ENCODE measurements at regions of chr6 and their contacts with region 1.

Region 1: GRCh38 chr6:27503436-27504030 is 30.6 kb upstream of the ZNF184 start:
- DNase-seq: peak; percentile 73
- ATAC-seq: peak; percentile 70
- H3K4me3 ChIP-seq: peak overlapping the region; percentile 78
- H3K27ac ChIP-seq: peak overlapping the region; percentile 58
- H3K4me1 ChIP-seq: no peaks in the 10 kb centered on the region
- H3K27me3 ChIP-seq: no peaks in the 10 kb centered on the region; a peak in 1 of 4 replicates
- CTCF ChIP-seq: no peak
- EP300 ChIP-seq: no peak
- POLR2A ChIP-seq: no peak
- RAD21 ChIP-seq: no peak

Region 2: GRCh38 chr6:27177485-27178406 is 325.8 kb before region 1 on chr6:
- CTCF ChIA-PET with region 1: interaction called, 3 read pairs
- POLR2A ChIA-PET with region 1: no interaction called
- RAD21 ChIA-PET with region 1: no interaction called
- SMC1A ChIA-PET with region 1: no interaction called
- in situ Hi-C with region 1: no loop called
- intact Hi-C with region 1: loop called (anchors 5 kb)
- DNase-seq: peak; percentile 61
- ATAC-seq: peak; percentile 89
- H3K4me3 ChIP-seq: peak overlapping the region; percentile 89
- H3K27ac ChIP-seq: peak overlapping the region; percentile 93
- H3K4me1 ChIP-seq: no peaks in the 10 kb centered on the region
- H3K27me3 ChIP-seq: no peaks in the 10 kb centered on the region
- CTCF ChIP-seq: peak; percentile 65 to 72 (median 70)
- EP300 ChIP-seq: no peak
- POLR2A ChIP-seq: peak; percentile 56; the same call in 1 of the 2 replicates
- RAD21 ChIP-seq: peak; percentile 54

Region 3: GRCh38 chr6:27479319-27480182 is 24.0 kb before region 1 on chr6:
- CTCF ChIA-PET with region 1: interaction called, 5 read pairs
- POLR2A ChIA-PET with region 1: interaction called, 3 read pairs
- RAD21 ChIA-PET with region 1: interaction called, 6 read pairs
- SMC1A ChIA-PET with region 1: interaction called, 4 read pairs
- in situ Hi-C with region 1: no loop called
- intact Hi-C with region 1: loop called (anchors 2 kb)
- DNase-seq: peak; percentile 97
- ATAC-seq: peak; percentile 86
- H3K4me3 ChIP-seq: peak overlapping the region; percentile 78
- H3K27ac ChIP-seq: peak overlapping the region; percentile 91
- H3K4me1 ChIP-seq: no peaks in the 10 kb centered on the region
- H3K27me3 ChIP-seq: no peaks in the 10 kb centered on the region
- CTCF ChIP-seq: no peak
- EP300 ChIP-seq: no peak; a peak in 1 of 4 replicates
- POLR2A ChIP-seq: peak; percentile 42
- RAD21 ChIP-seq: no peak

Region 4: DNA sequence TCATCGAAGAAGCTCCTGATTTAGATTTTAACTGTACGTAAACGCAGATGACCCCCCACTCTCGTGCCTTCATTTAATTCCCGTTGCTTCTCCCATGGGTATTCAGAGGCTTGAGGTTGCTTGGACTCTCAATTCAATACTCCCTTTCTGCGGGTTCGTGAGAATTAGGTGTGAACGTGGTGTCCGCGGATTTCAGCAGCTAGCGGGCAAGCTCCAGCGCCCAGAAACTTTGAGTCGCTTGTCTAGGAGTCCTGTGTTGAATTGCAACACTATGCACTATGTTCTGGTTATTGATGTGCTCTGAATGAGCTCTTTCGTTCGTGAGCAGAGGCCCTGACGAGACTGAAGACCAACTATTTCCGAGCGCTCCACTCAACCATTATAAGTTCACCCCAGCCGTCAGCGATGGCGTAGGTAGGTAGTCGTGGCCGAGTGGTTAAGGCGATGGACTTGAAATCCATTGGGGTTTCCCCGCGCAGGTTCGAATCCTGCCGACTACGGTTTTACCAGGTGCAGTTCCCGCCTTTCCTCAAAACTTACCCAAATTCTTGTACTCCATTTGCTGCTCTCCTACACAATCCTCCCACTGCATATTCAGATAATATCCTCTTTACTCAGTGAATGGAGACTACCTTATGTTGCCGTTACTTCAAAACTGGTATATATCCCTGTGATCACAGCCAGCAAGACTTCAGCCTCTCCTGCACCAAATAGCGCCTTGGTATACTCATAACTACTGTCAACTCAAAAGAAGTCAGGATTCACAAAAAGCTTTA is 41.9 kb after region 1 on chr6:
- CTCF ChIA-PET with region 1: no interaction called
- POLR2A ChIA-PET with region 1: no interaction called
- RAD21 ChIA-PET with region 1: no interaction called
- SMC1A ChIA-PET with region 1: interaction called, 3 read pairs
- in situ Hi-C with region 1: no loop called
- intact Hi-C with region 1: loop called (anchors 5 kb)
- DNase-seq: peak; percentile 68
- ATAC-seq: peak; percentile 84
- H3K4me3 ChIP-seq: peak overlapping the region; percentile 75
- H3K27ac ChIP-seq: peak overlapping the region; percentile 5; the same call in 1 of the 2 replicates
- H3K4me1 ChIP-seq: no peaks in the 10 kb centered on the region
- H3K27me3 ChIP-seq: no peaks in the 10 kb centered on the region
- CTCF ChIP-seq: no peak
- EP300 ChIP-seq: no peak; a peak in 1 of 4 replicates
- POLR2A ChIP-seq: no peak
- RAD21 ChIP-seq: no peak

Region 5: GRCh38 chr6:27642744-27643456 is 139.4 kb after region 1 on chr6:
- CTCF ChIA-PET with region 1: no interaction called
- POLR2A ChIA-PET with region 1: no interaction called
- RAD21 ChIA-PET with region 1: no interaction called
- SMC1A ChIA-PET with region 1: no interaction called
- in situ Hi-C with region 1: no loop called
- intact Hi-C with region 1: no loop called
- DNase-seq: no peak
- ATAC-seq: no peak
- H3K4me3 ChIP-seq: no peak overlapping the region
- H3K27ac ChIP-seq: no peak overlapping the region
- H3K4me1 ChIP-seq: no peaks in the 10 kb centered on the region
- H3K27me3 ChIP-seq: no peaks in the 10 kb centered on the region
- CTCF ChIP-seq: no peak
- EP300 ChIP-seq: no peak
- POLR2A ChIP-seq: no peak
- RAD21 ChIP-seq: no peak

Region 6: GRCh38 chr6:27672113-27672799 is 168.7 kb after region 1 on chr6:
- CTCF ChIA-PET with region 1: no interaction called
- POLR2A ChIA-PET with region 1: no interaction called
- RAD21 ChIA-PET with region 1: interaction called, 6 read pairs
- SMC1A ChIA-PET with region 1: no interaction called
- in situ Hi-C with region 1: no loop called
- intact Hi-C with region 1: loop called (anchors 5 kb)
- DNase-seq: no peak
- ATAC-seq: peak; percentile 67
- H3K4me3 ChIP-seq: peak overlapping the region; percentile 38; the same call in 1 of the 2 replicates
- H3K27ac ChIP-seq: peak overlapping the region; percentile 90
- H3K4me1 ChIP-seq: peaks cover 9% of the 10 kb centered on the region
- H3K27me3 ChIP-seq: no peaks in the 10 kb centered on the region
- CTCF ChIP-seq: no peak
- EP300 ChIP-seq: no peak; a peak in 1 of 4 replicates
- POLR2A ChIP-seq: no peak; the same call in 1 of the 2 replicates
- RAD21 ChIP-seq: no peak

Measured in GM12878 (cell line).